ENCODE measurements at regions of chr6 and their contacts with region 1.

Region 1: DNA sequence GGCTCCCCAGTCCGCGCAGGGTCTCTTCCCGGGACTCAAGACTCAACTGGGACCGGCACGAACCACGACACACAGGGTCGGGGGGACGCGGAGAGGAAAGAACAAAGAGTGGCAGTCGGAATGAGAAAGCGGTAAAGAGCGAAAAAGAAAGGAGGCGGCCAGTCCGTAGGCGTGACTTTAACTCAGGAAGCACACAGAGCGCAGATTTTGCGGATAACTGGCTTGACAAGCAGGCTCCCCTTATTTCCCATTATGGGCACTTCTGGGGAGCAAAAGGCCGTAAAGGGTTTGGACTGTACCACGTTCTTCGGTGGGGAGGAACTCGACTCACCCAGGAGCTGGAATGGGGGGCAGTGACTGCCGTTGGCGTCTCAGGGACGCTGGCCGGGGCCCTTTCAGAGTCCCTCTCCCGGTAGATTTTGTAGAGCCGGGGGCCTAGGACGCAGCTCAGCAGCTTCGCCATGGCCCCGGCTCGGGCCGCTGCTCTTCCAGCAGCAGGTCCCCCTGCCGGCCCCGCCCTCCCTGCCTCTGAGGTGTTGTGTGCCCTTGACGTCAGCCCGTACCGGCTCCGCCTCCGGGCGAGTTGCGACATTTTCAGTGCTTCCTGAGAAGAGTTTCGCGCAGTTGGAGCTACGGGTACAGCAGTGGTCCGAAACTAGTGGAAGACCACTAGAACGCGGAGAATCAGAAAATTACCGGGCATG is at the start of gene ABHD16A:
- DNase-seq: peak; percentile 95
- H3K4me3 Mint-ChIP-seq: peak within 1 kb of the TSS; percentile 98
- H3K27ac Mint-ChIP-seq: peak within 1 kb of the TSS; percentile 97
- H3K4me1 Mint-ChIP-seq: peaks cover 26% of the 10 kb centered on the region
- H3K27me3 Mint-ChIP-seq: no peaks in the 10 kb centered on the region
- total RNA-seq, gene ABHD16A: 45.7 and 46.5 TPM in 2 replicates

Region 2: GRCh38 chr6:31652925-31653718 is 49.8 kb before region 1 on chr6:
- intact Hi-C with region 1: loop called (anchors 1 kb)
- DNase-seq: peak; percentile 81
- H3K4me3 Mint-ChIP-seq: peak overlapping the region; percentile 93
- H3K27ac Mint-ChIP-seq: peak overlapping the region; percentile 100
- H3K4me1 Mint-ChIP-seq: peaks cover 48% of the 10 kb centered on the region
- H3K27me3 Mint-ChIP-seq: no peaks in the 10 kb centered on the region

Region 3: GRCh38 chr6:31729515-31729978 is 26.6 kb after region 1 on chr6:
- intact Hi-C with region 1: loop called (anchors 1 kb)
- DNase-seq: peak; percentile 68
- H3K4me3 Mint-ChIP-seq: peak overlapping the region; percentile 95
- H3K27ac Mint-ChIP-seq: peak overlapping the region; percentile 74
- H3K4me1 Mint-ChIP-seq: peaks cover 54% of the 10 kb centered on the region
- H3K27me3 Mint-ChIP-seq: no peaks in the 10 kb centered on the region

Region 4: GRCh38 chr6:31776989-31777666 is 74.2 kb after region 1 on chr6 and contains the start of gene VWA7:
- intact Hi-C with region 1: loop called (anchors 2 kb)
- DNase-seq: peak; percentile 68
- H3K4me3 Mint-ChIP-seq: no peak within 1 kb of the TSS
- H3K27ac Mint-ChIP-seq: peak within 1 kb of the TSS; percentile 87
- H3K4me1 Mint-ChIP-seq: peaks cover 25% of the 10 kb centered on the region
- H3K27me3 Mint-ChIP-seq: no peaks in the 10 kb centered on the region
- total RNA-seq, gene VWA7: 2.9 and 5.0 TPM in 2 replicates

Region 5: GRCh38 chr6:31827286-31828079 is 124.5 kb after region 1 on chr6 and contains the start of gene HSPA1B:
- intact Hi-C with region 1: loop called (anchors 1 kb)
- DNase-seq: peak; percentile 95
- H3K4me3 Mint-ChIP-seq: peak within 1 kb of the TSS; percentile 83
- H3K27ac Mint-ChIP-seq: peak within 1 kb of the TSS; percentile 93
- H3K4me1 Mint-ChIP-seq: peaks cover 41% of the 10 kb centered on the region
- H3K27me3 Mint-ChIP-seq: no peaks in the 10 kb centered on the region
- total RNA-seq, gene HSPA1B: 152 and 155 TPM in 2 replicates

Region 6: DNA sequence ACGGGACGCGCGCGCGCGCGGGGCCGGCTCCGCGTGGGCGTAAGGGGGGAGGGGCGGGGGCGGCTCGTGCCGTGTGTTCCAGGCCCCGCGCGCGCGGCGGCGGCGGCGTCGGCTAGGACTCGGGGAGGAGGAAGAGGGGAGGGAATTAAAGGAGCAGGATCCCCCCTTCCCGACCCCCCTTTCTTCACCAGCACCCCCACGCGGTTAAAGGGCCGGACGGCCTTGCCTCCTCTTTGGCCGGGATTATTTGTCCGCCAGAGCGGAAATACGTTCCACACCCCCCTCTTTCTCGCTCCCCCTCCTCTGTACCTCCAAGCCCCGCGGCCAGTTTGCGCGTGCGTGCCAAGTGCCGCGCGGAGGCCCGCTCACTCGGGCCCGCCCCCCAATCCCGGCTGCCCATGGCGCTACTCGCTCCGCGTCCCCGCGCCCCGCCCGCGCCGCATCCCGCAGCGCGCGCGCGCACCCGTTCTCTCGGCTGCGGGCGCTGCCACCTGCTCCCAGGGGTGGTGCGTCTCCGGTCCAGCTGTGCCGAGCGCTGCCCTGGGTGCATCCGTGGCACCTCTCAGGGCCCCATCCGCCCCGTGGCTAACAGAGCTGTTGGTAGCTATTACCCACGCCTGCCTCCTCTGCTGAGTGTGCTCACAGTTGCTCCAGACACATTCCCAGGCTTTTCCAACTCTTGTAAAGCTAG is 199.1 kb after region 1 on chr6 and contains the start of gene ZBTB12:
- intact Hi-C with region 1: loop called (anchors 2 kb)
- DNase-seq: peak; percentile 82
- H3K4me3 Mint-ChIP-seq: peak within 1 kb of the TSS; percentile 81
- H3K27ac Mint-ChIP-seq: peak within 1 kb of the TSS; percentile 88
- H3K4me1 Mint-ChIP-seq: peaks cover 37% of the 10 kb centered on the region
- H3K27me3 Mint-ChIP-seq: no peaks in the 10 kb centered on the region
- total RNA-seq, gene ZBTB12: 4.6 and 5.1 TPM in 2 replicates

Measured in activated T-helper 1 cell treated with anti-CD3 and anti-CD28 coated beads, Interleukin-12 subunit alpha, Interleukin-12 subunit beta, Interleukin-2, Interleukin-4 antibody, amounts not matched to agents 30 ng/mL and 10 ng/mL and 1 ng/mL, durations not matched to agents 14 hours and 24 hours and 36 hours (primary cell).